ENCODE measurements at regions of chr2 and their contacts with region 1.

Region 1: DNA sequence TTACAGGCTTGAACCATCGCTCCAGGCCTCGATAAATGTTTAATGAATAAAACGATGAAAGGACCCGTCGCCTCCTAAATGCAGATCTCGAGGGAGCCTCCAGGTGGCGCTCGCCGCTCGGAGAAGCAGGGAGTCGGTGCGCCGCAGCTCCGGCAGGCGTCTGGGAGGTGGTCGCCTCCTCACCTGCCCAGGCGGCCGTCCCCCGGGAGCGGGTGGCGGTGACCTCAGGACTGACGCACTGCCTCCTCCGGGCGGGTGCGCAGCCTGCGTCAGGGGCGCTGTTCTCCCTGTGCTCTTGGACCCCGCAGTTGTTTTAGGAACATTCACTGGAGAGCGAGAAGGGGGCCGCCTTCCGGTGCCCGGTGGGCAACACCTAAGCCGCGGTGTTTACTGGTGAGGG is 38.6 kb upstream of the POLE4 start:
- DNase-seq: peak; percentile 74

Region 2: DNA sequence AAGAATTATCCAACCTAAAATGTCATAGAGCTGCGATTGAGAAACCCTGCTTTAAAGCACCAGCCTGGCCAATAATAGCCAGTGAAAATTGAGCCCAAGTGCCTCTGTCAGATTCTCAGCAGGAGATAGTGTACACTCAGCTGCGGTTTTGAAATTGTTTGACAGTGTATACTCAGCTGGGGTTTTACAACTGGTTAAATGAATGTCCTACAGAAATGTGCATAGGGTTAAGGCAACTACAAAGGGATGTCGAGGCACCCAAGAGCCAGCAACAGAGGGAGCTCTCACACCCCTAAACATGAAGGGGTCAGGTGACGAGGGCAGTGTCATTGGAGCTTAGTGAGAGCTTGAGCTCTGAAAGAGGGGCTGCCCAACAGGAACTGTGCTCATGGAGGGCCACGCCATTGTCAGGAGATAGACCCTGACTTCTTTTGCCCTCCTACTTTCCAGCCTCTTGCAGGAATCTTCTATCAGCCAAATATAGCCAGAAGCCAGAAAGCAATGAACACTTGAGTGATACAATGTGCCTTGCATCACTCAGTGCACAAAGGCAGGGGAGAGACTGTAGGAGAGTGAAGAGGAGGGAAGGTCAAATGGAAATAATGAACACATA is 1011.9 kb before region 1 on chr2:
- in situ Hi-C with region 1: no loop called
- DNase-seq: peak; percentile 42

Region 3: GRCh38 chr2:74406035-74406434 is 513.8 kb before region 1 on chr2:
- in situ Hi-C with region 1: no loop called
- DNase-seq: no peak

Region 4: DNA sequence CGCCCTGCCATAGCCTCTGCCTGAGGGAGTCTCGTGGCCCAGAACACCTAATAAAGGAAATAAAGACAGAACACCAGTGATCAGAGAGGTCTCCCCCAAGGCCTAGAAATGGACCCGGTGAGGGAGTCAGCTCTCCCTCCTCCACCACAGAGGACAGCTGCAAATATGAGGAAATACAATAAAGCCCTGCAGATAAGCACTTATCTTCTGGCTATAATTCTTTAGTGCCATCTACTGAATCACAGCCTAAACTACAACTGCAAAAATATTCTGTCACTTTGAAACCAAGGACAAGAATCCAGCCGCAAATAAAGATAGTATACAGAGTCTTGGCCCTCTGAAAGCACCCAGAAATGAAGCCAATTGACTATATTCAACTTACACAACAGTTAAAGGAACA is 321.9 kb after region 1 on chr2:
- in situ Hi-C with region 1: loop called (anchors 25 kb)
- DNase-seq: peak; percentile 58

Region 5: GRCh38 chr2:75608684-75609333 is 689.0 kb after region 1 on chr2:
- in situ Hi-C with region 1: loop called (anchors 25 kb)
- DNase-seq: peak; percentile 64